ENCODE measurements at regions of chr18 and their contacts with region 1.

Region 1: DNA sequence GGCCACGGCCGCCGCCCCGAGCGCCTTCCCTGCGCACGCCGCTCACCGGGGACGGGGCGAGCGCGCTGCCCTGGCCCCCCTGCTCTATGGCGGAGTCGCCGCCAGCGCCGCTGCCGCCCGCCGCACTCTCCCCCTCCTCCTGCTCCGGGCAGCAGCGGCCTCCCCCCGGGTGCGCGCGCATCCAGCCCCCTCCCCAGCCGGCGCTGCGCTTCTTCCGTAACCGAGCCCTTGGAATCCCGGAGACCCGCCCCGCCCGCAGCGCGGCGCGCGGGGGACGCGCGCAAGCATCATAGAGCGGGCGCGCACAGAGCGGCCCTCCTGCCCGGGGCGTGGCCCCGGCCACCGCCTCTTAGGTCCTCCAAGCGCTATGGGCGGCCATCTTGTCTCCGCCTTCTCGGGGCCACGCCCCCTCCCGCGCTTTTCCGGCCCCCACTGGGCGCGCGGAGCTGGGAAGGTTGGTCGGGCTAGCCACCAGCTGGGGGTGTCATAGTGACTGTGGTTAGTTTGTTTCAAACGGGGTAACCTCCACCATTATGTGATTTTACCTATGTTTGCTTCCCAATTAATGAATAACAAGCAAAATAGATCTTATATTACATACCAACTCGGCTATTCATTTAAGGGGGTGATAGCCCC is at the start of gene MBD2:
- DNase-seq: peak; percentile 95
- H3K4me3 Mint-ChIP-seq: peak within 1 kb of the TSS; percentile 91
- H3K27ac Mint-ChIP-seq: peak within 1 kb of the TSS; percentile 97
- H3K4me1 Mint-ChIP-seq: peaks cover 49% of the 10 kb centered on the region
- H3K27me3 Mint-ChIP-seq: no peaks in the 10 kb centered on the region
- total RNA-seq, gene MBD2: 133 to 134 TPM

Region 2: GRCh38 chr18:54209471-54210180 is 14.9 kb before region 1 on chr18:
- CTCF ChIA-PET with region 1: interaction called, 6 read pairs
- POLR2A ChIA-PET with region 1: interaction called, 12 read pairs
- DNase-seq: no peak
- H3K4me3 Mint-ChIP-seq: peak overlapping the region; percentile 5
- H3K27ac Mint-ChIP-seq: peak overlapping the region; percentile 67
- H3K4me1 Mint-ChIP-seq: peaks cover 45% of the 10 kb centered on the region
- H3K27me3 Mint-ChIP-seq: no peaks in the 10 kb centered on the region

Region 3: DNA sequence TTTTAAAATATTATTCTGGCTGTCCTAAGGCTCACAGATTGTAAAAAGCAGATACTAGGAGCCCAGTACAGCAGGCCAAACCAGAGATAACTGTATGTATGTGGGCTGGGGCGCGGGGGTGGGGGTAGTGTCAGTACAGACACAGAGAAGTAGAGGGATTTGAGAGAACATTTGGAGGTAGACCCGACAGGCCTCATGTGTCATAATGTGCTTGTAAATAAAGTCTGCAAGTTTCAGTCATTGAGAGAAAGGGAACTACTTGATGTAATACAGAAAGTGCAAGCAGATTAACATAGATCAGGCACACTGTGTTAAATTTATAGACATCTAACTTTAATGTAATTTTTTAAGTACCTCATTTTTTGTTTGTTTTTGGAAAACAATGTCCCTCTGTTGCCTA is 37.4 kb after region 1 on chr18:
- CTCF ChIA-PET with region 1: interaction called, 8 read pairs
- POLR2A ChIA-PET with region 1: interaction called, 16 read pairs
- DNase-seq: no peak
- H3K4me3 Mint-ChIP-seq: no peak overlapping the region
- H3K27ac Mint-ChIP-seq: peak overlapping the region; percentile 86
- H3K4me1 Mint-ChIP-seq: peaks cover 55% of the 10 kb centered on the region
- H3K27me3 Mint-ChIP-seq: no peaks in the 10 kb centered on the region

Region 4: DNA sequence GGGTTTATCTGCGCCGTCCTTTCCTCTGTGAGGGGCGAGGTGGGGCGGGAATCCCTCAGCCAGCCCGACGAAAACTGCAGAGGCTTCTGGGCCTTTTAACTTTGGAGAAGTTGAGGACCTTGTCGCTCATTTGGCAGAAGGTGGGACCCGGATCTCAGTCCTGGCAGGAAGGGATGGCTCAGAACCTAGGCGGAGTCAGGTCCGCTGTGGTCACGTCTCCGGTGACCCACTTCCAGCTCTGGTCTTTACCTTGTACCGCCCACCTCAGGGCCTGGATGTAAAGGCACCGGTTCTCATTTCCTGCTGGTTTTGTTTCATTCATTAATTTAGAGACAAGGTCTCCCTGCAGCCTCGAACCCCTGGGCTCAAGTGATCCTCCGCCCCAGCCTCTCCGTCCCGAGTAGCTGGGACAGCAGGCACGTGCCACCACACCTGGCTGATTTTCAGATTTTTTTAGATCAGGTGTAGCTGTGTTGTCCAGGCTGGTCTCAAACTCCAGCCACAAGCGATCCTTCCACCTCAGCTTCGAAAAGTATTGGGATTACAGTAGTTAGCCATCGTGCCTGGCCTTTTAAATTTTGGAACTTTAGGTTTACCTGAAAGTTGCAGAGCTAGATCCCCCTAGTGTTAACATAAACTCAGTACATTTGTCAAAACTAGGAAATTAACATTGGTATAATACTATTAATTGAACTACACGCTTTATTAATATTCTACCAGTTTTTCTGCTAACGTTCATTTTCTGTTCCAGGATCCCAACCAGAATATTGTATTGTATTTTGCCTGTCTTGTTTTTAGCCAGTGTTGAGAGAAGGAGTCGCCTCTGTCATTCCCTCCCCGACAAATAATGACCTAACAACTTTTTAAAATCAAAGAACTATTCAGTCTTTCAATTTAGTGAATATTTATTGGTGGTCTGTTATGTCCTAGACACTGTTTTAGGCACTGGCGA is 45.7 kb after region 1 on chr18:
- CTCF ChIA-PET with region 1: interaction called, 75 read pairs
- POLR2A ChIA-PET with region 1: interaction called, 52 read pairs
- DNase-seq: peak; percentile 76
- H3K4me3 Mint-ChIP-seq: peak overlapping the region; percentile 81
- H3K27ac Mint-ChIP-seq: peak overlapping the region; percentile 89
- H3K4me1 Mint-ChIP-seq: peaks cover 39% of the 10 kb centered on the region
- H3K27me3 Mint-ChIP-seq: no peaks in the 10 kb centered on the region

Region 5: GRCh38 chr18:54357660-54358494 is 133.4 kb after region 1 on chr18 and contains the starts of genes C18orf54 and STARD6:
- CTCF ChIA-PET with region 1: interaction called, 20 read pairs
- POLR2A ChIA-PET with region 1: interaction called, 26 read pairs
- DNase-seq: peak; percentile 92
- H3K4me3 Mint-ChIP-seq: peak within 1 kb of the TSS; percentile 95
- H3K27ac Mint-ChIP-seq: peak within 1 kb of the TSS; percentile 91
- H3K4me1 Mint-ChIP-seq: peaks cover 31% of the 10 kb centered on the region
- H3K27me3 Mint-ChIP-seq: no peaks in the 10 kb centered on the region
- total RNA-seq, gene C18orf54: 12.3 to 14.5 TPM
- total RNA-seq, gene STARD6: not detected

Region 6: GRCh38 chr18:54392543-54393023 is 168.1 kb after region 1 on chr18:
- CTCF ChIA-PET with region 1: interaction called, 12 read pairs
- POLR2A ChIA-PET with region 1: interaction called, 5 read pairs
- DNase-seq: no peak
- H3K4me3 Mint-ChIP-seq: no peak overlapping the region
- H3K27ac Mint-ChIP-seq: no peak overlapping the region
- H3K4me1 Mint-ChIP-seq: peaks cover 28% of the 10 kb centered on the region
- H3K27me3 Mint-ChIP-seq: peaks cover 13% of the 10 kb centered on the region